Left cardiac atrium (tissue), 4 donors: ENCODE measurements at regions of chr14 and their contacts with region 1.

Region 1: GRCh38 chr14:63276492-63277342 is 42.0 kb downstream of the GPHB5 start:
- DNase-seq: no peak
- ATAC-seq: peak in 1 of 2 donors; percentile 30

Region 2: GRCh38 chr14:62179367-62180018 is 1097.2 kb before region 1 on chr14:
- intact Hi-C with region 1: loop called (anchors 5 kb)
- DNase-seq: peak; percentile 46
- ATAC-seq: peak; percentile 67 to 74

Region 3: GRCh38 chr14:63155511-63156189 is 121.1 kb before region 1 on chr14:
- intact Hi-C with region 1: no loop called
- DNase-seq: no peak
- ATAC-seq: peak in 1 of 2 donors; percentile 53

Region 4: DNA sequence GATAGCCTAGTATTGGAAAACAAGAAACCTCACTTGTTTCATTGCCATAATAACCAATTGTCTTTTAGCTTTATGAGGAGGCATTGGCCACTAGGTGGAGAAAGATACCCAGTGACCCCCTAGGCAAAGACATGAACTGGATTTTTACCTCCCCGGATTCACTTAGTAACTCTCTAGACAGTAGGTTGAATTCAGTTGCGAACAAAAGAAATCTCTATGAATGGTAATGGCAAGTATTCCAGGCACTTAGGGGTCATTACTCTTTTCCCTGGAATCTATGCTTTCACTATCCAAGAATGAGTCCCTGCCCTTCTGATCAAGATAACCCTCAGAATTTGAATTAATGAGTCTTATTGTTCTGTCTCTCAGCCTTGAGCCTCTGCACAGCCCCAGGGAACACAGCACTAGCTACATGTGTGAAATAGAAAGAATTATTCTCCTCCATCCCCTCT is 101.9 kb before region 1 on chr14:
- intact Hi-C with region 1: loop called (anchors 2 kb)
- DNase-seq: no peak
- ATAC-seq: peak; percentile 60 to 61